ENCODE measurements at regions of chr16 and their contacts with region 1.

Region 1: DNA sequence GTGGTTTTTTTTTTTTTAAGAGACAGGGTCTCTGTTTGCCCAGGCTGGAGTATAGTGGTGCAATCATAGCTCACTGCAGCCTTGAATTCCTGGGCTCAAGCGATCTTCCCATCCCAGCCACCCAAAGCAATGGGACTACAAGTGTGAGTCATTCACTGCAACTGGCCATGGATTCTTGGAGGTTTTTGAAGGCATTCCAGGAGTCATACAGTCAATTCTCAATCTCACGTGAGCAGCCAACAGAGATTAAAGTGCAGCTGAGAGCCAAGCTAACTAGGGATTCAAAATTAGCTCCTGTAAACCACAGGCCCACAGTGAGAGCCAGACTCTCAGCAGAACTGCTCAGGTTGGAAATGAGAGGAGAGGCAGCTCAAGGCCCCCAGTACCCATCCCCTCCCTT is 30.2 kb downstream of the XPO6 start:
- DNase-seq: peak; percentile 88
- H3K4me3 ChIP-seq: peak overlapping the region; percentile 4; the same call in 1 of the 2 replicates
- CTCF ChIP-seq: no peak

Region 2: DNA sequence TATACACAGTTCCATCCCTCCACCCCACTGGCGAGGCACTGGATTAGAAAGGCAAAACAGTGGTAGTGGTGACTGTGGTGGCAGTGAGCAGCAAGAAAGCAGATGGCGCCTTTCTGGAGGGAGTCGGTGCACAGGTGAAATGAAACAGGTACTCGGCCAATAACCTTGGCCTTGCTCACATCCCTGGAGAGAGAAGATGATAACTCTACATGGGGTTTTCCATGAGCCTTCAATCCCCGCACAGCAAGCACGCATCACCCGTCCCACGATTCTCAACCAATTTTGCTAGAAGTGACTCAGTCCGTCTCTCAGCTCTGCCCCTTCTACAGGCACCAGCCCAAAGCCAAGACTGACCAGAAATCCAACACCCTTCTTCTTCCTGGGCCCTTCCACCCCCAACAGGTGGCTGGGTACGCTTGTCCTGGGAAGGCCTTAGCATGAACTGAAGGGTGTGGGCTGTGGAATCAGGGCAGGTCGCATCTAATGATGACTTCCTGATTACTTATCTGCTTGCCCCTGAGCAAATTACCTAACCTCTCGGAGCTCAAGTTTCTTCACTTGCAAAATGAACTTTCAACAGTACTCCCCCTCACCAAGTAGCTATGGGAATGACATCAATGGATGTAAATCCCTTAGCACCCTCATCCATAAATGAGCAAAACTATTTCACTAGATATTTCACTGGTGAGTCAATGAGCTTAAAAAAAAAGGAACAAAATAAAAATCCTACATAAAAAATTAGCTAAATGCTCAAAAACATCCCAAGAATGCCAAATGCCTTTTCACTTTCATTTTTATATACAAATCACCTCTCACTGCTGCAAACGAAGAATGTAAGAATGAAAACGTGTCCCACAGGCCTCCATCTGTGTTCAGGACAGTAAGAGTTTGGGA is 12.3 kb after region 1 on chr16:
- CTCF ChIA-PET with region 1: interaction called, 3 read pairs
- POLR2A ChIA-PET with region 1: interaction called, 14 read pairs
- DNase-seq: peak; percentile 97
- H3K4me3 ChIP-seq: peak overlapping the region; percentile 30
- CTCF ChIP-seq: no peak

Region 3: GRCh38 chr16:28258567-28258966 is 77.1 kb after region 1 on chr16:
- CTCF ChIA-PET with region 1: no interaction called
- POLR2A ChIA-PET with region 1: no interaction called
- DNase-seq: no peak
- H3K4me3 ChIP-seq: no peak overlapping the region
- CTCF ChIP-seq: no peak

Measured in AG04449 (cell line).